IMR-90 (cell line): ENCODE measurements at regions of chr5 and their contacts with region 1.

Region 1: DNA sequence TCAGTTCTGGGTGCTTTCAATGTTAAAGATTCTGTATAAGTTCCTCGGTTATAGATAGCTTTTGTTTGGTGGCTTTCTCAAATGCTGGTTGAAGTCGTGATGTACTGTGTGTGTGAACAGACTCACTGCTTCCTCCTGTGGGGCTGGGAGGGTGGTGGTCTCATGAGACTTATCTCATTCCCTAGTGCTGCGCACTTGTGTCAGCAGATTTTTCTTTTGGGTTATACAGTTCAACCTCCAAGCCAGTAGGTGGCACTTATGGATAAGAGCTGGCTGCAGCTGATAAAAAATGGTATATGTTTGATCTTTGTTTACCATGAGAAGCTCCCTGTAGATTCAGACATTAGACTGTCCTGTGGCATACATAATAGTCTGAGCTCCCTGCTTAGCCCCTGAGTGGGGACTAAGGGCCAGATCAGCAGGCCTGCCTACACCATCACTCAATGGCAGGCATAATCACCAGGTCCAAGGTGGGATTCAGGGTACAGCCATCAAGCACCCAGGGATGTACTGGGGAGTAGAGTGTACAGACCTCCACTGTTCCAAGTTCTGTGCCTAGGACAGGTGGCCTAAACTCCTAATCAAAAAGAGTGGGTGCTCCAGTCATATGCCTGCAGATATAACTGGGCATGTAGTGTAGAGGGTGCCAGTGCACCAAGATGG is 174.2 kb downstream of the OXCT1 start:
- DNase-seq: no peak
- ATAC-seq: peak; percentile 53
- H3K4me3 ChIP-seq: no peak overlapping the region
- H3K27ac ChIP-seq: no peak overlapping the region
- H3K4me1 ChIP-seq: no peaks in the 10 kb centered on the region
- H3K27me3 ChIP-seq: peaks cover 2% of the 10 kb centered on the region
- CTCF ChIP-seq: peak; percentile 35
- POLR2A ChIP-seq: no peak
- RAD21 ChIP-seq: peak; percentile 44

Region 2: DNA sequence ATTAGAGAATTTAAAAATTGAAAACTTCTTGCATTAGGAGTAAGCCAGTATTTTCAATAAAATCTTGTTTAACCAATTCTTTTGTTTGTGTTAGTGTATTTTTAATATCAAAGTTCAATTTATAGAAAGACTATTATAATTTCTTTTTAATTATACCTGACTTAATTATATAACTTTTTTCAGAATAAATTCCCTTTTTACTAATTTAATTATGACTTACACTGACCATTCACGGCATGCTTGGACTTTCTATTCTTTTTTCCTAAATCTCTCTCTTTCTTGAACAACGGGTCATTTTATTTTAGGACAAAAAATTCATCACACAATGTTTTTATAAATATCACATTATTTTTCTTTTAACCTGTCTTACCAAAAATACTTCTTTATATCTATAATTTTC is 1571.7 kb before region 1 on chr5:
- CTCF ChIA-PET with region 1: no interaction called
- POLR2A ChIA-PET with region 1: no interaction called
- dilution Hi-C with region 1: no loop called
- in situ Hi-C with region 1: no loop called
- intact Hi-C with region 1: no loop called
- DNase-seq: no peak
- ATAC-seq: no peak
- H3K4me3 ChIP-seq: no peak overlapping the region
- H3K27ac ChIP-seq: no peak overlapping the region
- H3K4me1 ChIP-seq: no peaks in the 10 kb centered on the region
- H3K27me3 ChIP-seq: no peaks in the 10 kb centered on the region
- CTCF ChIP-seq: no peak
- POLR2A ChIP-seq: no peak
- RAD21 ChIP-seq: no peak

Region 3: GRCh38 chr5:41707853-41708603 is 12.0 kb after region 1 on chr5:
- CTCF ChIA-PET with region 1: interaction called, 11 read pairs
- POLR2A ChIA-PET with region 1: no interaction called
- dilution Hi-C with region 1: no loop called
- in situ Hi-C with region 1: no loop called
- intact Hi-C with region 1: no loop called
- DNase-seq: peak; percentile 76
- ATAC-seq: peak; percentile 99
- H3K4me3 ChIP-seq: no peak overlapping the region
- H3K27ac ChIP-seq: peak overlapping the region; percentile 72; the same call in 1 of the 2 replicates
- H3K4me1 ChIP-seq: peaks cover 5% of the 10 kb centered on the region
- H3K27me3 ChIP-seq: no peaks in the 10 kb centered on the region
- CTCF ChIP-seq: peak; percentile 89
- POLR2A ChIP-seq: no peak
- RAD21 ChIP-seq: peak; percentile 87

Region 4: GRCh38 chr5:41738710-41739354 is 42.8 kb after region 1 on chr5:
- CTCF ChIA-PET with region 1: no interaction called
- POLR2A ChIA-PET with region 1: no interaction called
- dilution Hi-C with region 1: no loop called
- in situ Hi-C with region 1: no loop called
- intact Hi-C with region 1: no loop called
- DNase-seq: peak; percentile 2
- ATAC-seq: no peak
- H3K4me3 ChIP-seq: no peak overlapping the region
- H3K27ac ChIP-seq: no peak overlapping the region
- H3K4me1 ChIP-seq: no peaks in the 10 kb centered on the region
- H3K27me3 ChIP-seq: no peaks in the 10 kb centered on the region
- CTCF ChIP-seq: no peak
- POLR2A ChIP-seq: no peak
- RAD21 ChIP-seq: no peak

Region 5: GRCh38 chr5:42057254-42057690 is 361.2 kb after region 1 on chr5:
- CTCF ChIA-PET with region 1: no interaction called
- POLR2A ChIA-PET with region 1: no interaction called
- dilution Hi-C with region 1: no loop called
- in situ Hi-C with region 1: loop called (anchors 25 kb)
- intact Hi-C with region 1: loop called (anchors 10 kb)
- DNase-seq: peak; percentile 25
- ATAC-seq: peak; percentile 61; the same call in 1 of the 2 replicates
- H3K4me3 ChIP-seq: no peak overlapping the region
- H3K27ac ChIP-seq: no peak overlapping the region
- H3K4me1 ChIP-seq: no peaks in the 10 kb centered on the region
- H3K27me3 ChIP-seq: no peaks in the 10 kb centered on the region
- CTCF ChIP-seq: peak; percentile 61
- POLR2A ChIP-seq: no peak
- RAD21 ChIP-seq: peak; percentile 53; the same call in 1 of the 2 replicates

Region 6: GRCh38 chr5:42600431-42600830 is 904.4 kb after region 1 on chr5:
- CTCF ChIA-PET with region 1: no interaction called
- POLR2A ChIA-PET with region 1: no interaction called
- dilution Hi-C with region 1: no loop called
- in situ Hi-C with region 1: no loop called
- intact Hi-C with region 1: no loop called
- DNase-seq: no peak
- ATAC-seq: no peak
- H3K4me3 ChIP-seq: no peak overlapping the region
- H3K27ac ChIP-seq: no peak overlapping the region
- H3K4me1 ChIP-seq: no peaks in the 10 kb centered on the region
- H3K27me3 ChIP-seq: no peaks in the 10 kb centered on the region
- CTCF ChIP-seq: no peak
- POLR2A ChIP-seq: no peak
- RAD21 ChIP-seq: no peak